Mammary epithelial cell (primary cell): ENCODE measurements at regions of chr5 and their contacts with region 1.

Region 1: GRCh38 chr5:36606428-36607113 is at the start of gene SLC1A3:
- DNase-seq: peak; percentile 83
- H3K4me3 ChIP-seq: peak within 1 kb of the TSS; percentile 69 to 83 (median 69)
- H3K27ac ChIP-seq: peak within 1 kb of the TSS; percentile 85
- H3K4me1 ChIP-seq: peaks cover 20% of the 10 kb centered on the region
- H3K27me3 ChIP-seq: no peaks in the 10 kb centered on the region
- CTCF ChIP-seq: no peak
- total RNA-seq, gene SLC1A3: 21.7 to 24.2 TPM

Region 2: DNA sequence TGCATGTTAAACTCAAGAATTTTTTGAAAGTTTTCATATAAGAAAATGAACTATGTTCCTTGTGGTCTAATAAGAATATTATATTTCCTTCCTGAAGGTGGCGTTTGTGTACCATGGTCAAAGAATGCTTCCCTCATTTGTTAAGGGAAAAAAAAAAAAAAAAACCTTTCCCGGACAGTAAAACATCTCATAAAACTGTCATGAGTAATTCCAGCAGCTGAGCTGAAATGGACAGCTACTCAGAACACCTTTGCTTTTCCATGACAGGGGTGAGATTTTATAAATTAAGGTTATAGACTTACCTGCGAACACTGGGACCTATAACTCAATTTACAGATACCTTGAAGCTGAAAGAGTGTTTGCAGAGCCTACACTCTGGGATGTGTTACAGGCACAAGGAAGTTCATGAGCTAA is 191.7 kb before region 1 on chr5:
- CTCF ChIA-PET with region 1: interaction called, 3 read pairs
- dilution Hi-C with region 1: no loop called
- in situ Hi-C with region 1: no loop called
- intact Hi-C with region 1: loop called (anchors 2 kb)
- DNase-seq: peak; percentile 60
- H3K4me3 ChIP-seq: no peak overlapping the region
- H3K27ac ChIP-seq: no peak overlapping the region
- H3K4me1 ChIP-seq: peaks cover 23% of the 10 kb centered on the region
- H3K27me3 ChIP-seq: no peaks in the 10 kb centered on the region
- CTCF ChIP-seq: peak; percentile 40 to 55

Region 3: DNA sequence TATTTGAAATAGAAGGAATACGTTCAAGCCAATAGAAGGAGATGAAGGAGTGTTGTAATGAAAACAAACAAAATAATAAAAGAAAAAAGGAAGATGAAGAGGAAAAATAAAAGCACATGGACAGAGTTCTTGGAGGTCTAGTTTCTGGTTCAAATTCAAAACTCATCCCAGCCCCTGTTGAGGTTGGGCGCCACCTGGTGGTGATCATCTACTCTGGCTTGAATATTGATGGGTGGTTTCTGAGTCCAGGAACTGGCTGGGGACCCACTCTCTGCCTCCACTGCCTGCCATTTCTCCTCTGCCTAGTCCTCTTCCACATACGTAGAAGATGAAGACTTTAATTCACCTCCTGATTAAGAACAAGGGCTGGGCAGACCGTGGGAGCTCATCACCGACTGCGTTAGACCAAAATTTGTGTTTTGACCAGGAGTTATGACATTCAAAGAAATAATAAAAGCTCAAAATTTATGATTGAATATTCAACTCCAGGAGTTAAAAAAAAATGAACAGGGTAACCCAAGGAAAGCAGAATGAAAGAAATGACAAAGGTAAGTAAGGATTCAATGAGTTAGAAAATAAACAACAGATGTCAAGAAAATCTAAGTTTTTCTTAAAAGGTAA is 99.1 kb before region 1 on chr5:
- CTCF ChIA-PET with region 1: no interaction called
- dilution Hi-C with region 1: no loop called
- in situ Hi-C with region 1: no loop called
- intact Hi-C with region 1: loop called (anchors 10 kb)
- DNase-seq: peak; percentile 42
- H3K4me3 ChIP-seq: no peak overlapping the region
- H3K27ac ChIP-seq: no peak overlapping the region
- H3K4me1 ChIP-seq: peaks cover 12% of the 10 kb centered on the region
- H3K27me3 ChIP-seq: no peaks in the 10 kb centered on the region
- CTCF ChIP-seq: peak; percentile 79 to 86

Region 4: DNA sequence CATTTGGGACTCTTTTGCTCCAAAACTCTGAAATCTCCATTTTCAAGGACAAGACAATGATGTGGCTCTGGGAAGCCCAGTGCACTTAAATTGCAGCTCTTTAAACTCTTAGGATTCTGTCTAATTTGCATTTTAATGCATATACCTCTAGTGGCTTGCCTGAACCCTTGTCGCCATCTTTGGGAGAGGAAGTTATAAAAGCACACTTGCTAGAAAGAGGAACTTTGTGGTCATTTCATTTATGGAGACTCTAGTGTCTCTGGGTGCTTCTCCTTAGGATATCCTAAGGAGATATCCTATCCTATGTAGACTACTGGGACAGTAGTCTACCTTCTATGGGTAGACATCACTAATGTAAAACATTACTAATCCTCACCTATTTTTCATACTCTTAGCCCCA is 77.4 kb before region 1 on chr5:
- CTCF ChIA-PET with region 1: no interaction called
- dilution Hi-C with region 1: no loop called
- in situ Hi-C with region 1: no loop called
- intact Hi-C with region 1: loop called (anchors 5 kb)
- DNase-seq: no peak
- H3K4me3 ChIP-seq: no peak overlapping the region
- H3K27ac ChIP-seq: no peak overlapping the region
- H3K4me1 ChIP-seq: peaks cover 14% of the 10 kb centered on the region
- H3K27me3 ChIP-seq: no peaks in the 10 kb centered on the region
- CTCF ChIP-seq: no peak

Region 5: GRCh38 chr5:36575361-36575781 is 31.2 kb before region 1 on chr5:
- CTCF ChIA-PET with region 1: no interaction called
- dilution Hi-C with region 1: no loop called
- in situ Hi-C with region 1: no loop called
- intact Hi-C with region 1: loop called (anchors 2 kb)
- DNase-seq: peak; percentile 80
- H3K4me3 ChIP-seq: no peak overlapping the region
- H3K27ac ChIP-seq: peak overlapping the region; percentile 84
- H3K4me1 ChIP-seq: peaks cover 43% of the 10 kb centered on the region
- H3K27me3 ChIP-seq: no peaks in the 10 kb centered on the region
- CTCF ChIP-seq: no peak

Region 6: GRCh38 chr5:36590513-36591286 is 15.9 kb before region 1 on chr5:
- CTCF ChIA-PET with region 1: no interaction called
- dilution Hi-C with region 1: no loop called
- in situ Hi-C with region 1: no loop called
- intact Hi-C with region 1: no loop called
- DNase-seq: no peak
- H3K4me3 ChIP-seq: no peak overlapping the region
- H3K27ac ChIP-seq: no peak overlapping the region
- H3K4me1 ChIP-seq: no peaks in the 10 kb centered on the region
- H3K27me3 ChIP-seq: no peaks in the 10 kb centered on the region
- CTCF ChIP-seq: no peak

Region 7: DNA sequence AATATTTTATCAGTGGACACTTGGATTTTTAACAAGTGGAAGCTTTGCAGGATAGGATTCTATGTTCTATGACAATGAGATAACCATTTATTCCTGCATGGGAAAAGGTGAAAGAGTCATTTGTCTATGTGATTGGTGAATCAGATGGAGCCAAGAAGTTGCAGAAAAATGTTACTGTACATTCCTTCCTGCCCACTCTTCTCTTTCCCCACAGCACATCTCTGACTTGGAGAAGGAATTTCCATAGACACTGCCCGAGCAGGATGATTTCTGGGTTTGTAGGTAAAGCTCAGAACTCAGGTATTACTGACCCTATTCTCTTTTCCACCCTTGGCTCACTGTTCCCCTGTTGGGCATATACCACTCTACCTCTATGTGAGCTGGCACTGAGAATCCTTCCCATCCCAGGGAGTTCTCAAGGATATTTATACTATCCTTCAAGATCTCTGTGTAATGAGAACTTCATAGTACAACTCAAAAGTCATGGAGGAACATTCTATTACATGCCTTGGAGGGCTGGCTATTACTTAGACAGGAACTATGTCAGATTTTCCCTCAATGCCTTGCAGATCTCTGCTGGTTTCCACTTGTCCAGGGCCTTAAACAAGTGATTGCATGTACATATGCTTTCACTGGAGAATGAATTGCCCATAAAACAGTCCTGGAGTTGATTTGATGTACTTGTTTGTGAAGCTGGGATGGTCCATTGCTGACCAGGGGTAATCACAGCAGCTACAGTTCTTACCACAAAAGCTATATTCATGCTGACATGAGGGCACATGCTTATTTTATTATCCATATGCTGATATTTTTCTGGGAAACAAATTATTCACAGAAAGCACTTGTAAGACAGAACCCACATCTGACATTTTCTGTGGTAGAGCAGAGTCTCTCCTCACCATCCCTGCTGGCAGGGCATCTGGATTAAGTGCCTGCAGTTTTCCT is 23.9 kb after region 1 on chr5:
- CTCF ChIA-PET with region 1: no interaction called
- dilution Hi-C with region 1: no loop called
- in situ Hi-C with region 1: no loop called
- intact Hi-C with region 1: loop called (anchors 1 kb)
- DNase-seq: peak; percentile 79
- H3K4me3 ChIP-seq: no peak overlapping the region
- H3K27ac ChIP-seq: peak overlapping the region; percentile 43
- H3K4me1 ChIP-seq: peaks cover 20% of the 10 kb centered on the region
- H3K27me3 ChIP-seq: no peaks in the 10 kb centered on the region
- CTCF ChIP-seq: no peak

Region 8: GRCh38 chr5:36646507-36647023 is 40.0 kb after region 1 on chr5:
- CTCF ChIA-PET with region 1: no interaction called
- dilution Hi-C with region 1: no loop called
- in situ Hi-C with region 1: no loop called
- intact Hi-C with region 1: no loop called
- DNase-seq: no peak
- H3K4me3 ChIP-seq: no peak overlapping the region
- H3K27ac ChIP-seq: no peak overlapping the region
- H3K4me1 ChIP-seq: no peaks in the 10 kb centered on the region
- H3K27me3 ChIP-seq: no peaks in the 10 kb centered on the region
- CTCF ChIP-seq: no peak

Region 9: GRCh38 chr5:36657563-36657995 is 51.0 kb after region 1 on chr5:
- CTCF ChIA-PET with region 1: no interaction called
- dilution Hi-C with region 1: no loop called
- in situ Hi-C with region 1: no loop called
- intact Hi-C with region 1: loop called (anchors 2 kb)
- DNase-seq: peak; percentile 99
- H3K4me3 ChIP-seq: no peak overlapping the region
- H3K27ac ChIP-seq: peak overlapping the region; percentile 76
- H3K4me1 ChIP-seq: peaks cover 51% of the 10 kb centered on the region
- H3K27me3 ChIP-seq: no peaks in the 10 kb centered on the region
- CTCF ChIP-seq: no peak